ENCODE measurements at regions of chr2 and their contacts with region 1.

Region 1: DNA sequence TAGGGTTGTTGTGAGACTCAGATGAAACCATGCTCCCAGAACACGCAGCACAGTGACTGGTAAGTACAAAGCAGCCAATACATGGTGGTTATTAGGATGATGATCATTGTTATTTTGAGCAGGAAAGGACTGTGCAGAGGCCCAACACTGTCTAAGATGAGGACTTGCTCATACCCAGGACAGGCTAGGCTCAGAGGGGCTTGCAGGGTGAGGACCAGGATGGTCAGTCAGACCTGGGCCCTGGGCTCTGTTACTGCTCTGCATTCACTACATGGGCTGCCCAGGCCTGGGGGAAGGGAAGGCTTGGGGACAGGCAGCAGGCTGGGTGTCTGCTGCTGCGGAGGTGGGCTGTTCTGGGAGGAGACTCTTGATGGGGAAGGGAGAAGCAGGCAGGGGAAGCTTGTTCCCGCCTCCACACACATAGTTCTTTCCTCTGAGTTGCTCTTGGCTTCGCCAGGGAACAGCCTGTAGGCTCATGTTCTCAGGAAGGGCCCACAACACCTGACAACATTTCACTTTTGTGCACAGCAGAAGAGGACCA is 17.5 kb downstream of the CAPN13 start:
- DNase-seq: peak in 1 of 2 experiments; percentile 43
- H3K4me3 ChIP-seq: no peak overlapping the region
- H3K27ac ChIP-seq: no peak overlapping the region
- H3K4me1 ChIP-seq: peaks cover 0 to 2% (median 0%) of the 10 kb centered on the region in 4 experiments; a peak in 1 of 7 replicates
- H3K27me3 ChIP-seq: no peaks in the 10 kb centered on the region
- CTCF ChIP-seq: no peak
- EP300 ChIP-seq: no peak
- POLR2A ChIP-seq: no peak
- RAD21 ChIP-seq: no peak

Region 2: DNA sequence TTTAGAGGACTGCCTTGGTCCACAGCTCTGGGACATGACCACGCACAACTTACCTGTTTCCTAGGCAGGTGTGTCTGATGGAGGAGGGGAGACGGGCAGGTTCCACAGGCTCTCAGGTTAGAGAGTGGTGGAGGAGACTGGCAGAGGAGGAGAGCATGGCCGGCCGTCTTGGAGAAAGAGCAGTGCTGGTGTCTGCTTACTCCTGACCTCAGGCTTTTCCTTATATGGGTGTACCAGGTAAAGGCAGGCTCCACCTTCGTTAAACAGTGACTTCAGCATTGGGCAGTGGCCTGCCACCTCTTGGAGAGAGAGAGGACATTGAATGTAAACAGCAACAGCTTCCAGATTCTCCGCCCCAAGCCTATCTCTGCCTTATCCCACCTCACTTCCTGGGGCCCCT is 17.5 kb after region 1 on chr2 and contains the start of gene CAPN13:
- CTCF ChIA-PET with region 1: interaction called, 12 read pairs
- POLR2A ChIA-PET with region 1: no interaction called
- DNase-seq: peak in 1 of 2 experiments; percentile 15
- H3K4me3 ChIP-seq: 0 out of 8 replicates have a peak within 1 kb of the TSS, but pooled peaks of 1 of the 4 experiments have one; percentile 11
- H3K27ac ChIP-seq: no peak within 1 kb of the TSS
- H3K4me1 ChIP-seq: no peaks in the 10 kb centered on the region
- H3K27me3 ChIP-seq: no peaks in the 10 kb centered on the region; a peak in 1 of 7 replicates
- CTCF ChIP-seq: peak in 2 of 3 experiments; percentile 25 to 27; a peak in 3 of 4 replicates
- EP300 ChIP-seq: no peak
- POLR2A ChIP-seq: peak; percentile 57 to 69; a peak in 2 of 3 replicates
- RAD21 ChIP-seq: peak; percentile 7 to 19; a peak in 1 of 4 replicates
- total RNA-seq, gene CAPN13: 0.94 and 2.4 TPM in 2 replicates

Measured in H1 (cell line).